PC-3 (cell line): ENCODE measurements at regions of chr5 and their contacts with region 1.

Region 1: GRCh38 chr5:43207601-43208000 is 15.6 kb downstream of the NIM1K start:
- DNase-seq: peak; percentile 66
- ATAC-seq: no peak
- H3K4me3 ChIP-seq: no peak overlapping the region
- H3K27ac ChIP-seq: no peak overlapping the region
- H3K4me1 ChIP-seq: peaks cover 27% of the 10 kb centered on the region
- H3K27me3 ChIP-seq: no peaks in the 10 kb centered on the region
- CTCF ChIP-seq: no peak

Region 2: DNA sequence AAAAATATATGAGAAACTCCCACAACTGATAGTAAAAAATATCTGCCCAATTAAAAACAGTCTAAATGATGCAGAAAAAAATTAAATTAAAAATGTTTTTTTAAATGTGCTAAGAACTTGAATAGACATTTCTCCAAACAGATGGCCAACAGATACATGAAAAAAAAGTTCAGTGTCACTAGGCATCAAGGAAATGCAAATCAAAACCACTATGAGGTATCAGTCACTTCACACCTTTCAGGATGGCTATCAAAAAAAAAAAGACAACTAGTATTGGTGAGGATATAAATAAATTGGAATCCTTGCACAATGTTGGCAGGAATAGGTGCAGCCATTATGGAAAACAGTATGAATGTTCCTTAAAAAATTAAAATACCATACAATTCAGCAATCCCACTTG is 70.3 kb before region 1 on chr5:
- CTCF ChIA-PET with region 1: no interaction called
- POLR2A ChIA-PET with region 1: no interaction called
- intact Hi-C with region 1: no loop called
- DNase-seq: no peak
- ATAC-seq: no peak
- H3K4me3 ChIP-seq: no peak overlapping the region
- H3K27ac ChIP-seq: no peak overlapping the region
- H3K4me1 ChIP-seq: no peaks in the 10 kb centered on the region
- H3K27me3 ChIP-seq: no peaks in the 10 kb centered on the region
- CTCF ChIP-seq: no peak

Region 3: GRCh38 chr5:43227655-43228054 is 20.1 kb after region 1 on chr5:
- CTCF ChIA-PET with region 1: no interaction called
- POLR2A ChIA-PET with region 1: interaction called, 5 read pairs
- intact Hi-C with region 1: loop called (anchors 2 kb)
- DNase-seq: peak; percentile 84
- ATAC-seq: peak; percentile 60
- H3K4me3 ChIP-seq: no peak overlapping the region
- H3K27ac ChIP-seq: no peak overlapping the region
- H3K4me1 ChIP-seq: peaks cover 3% of the 10 kb centered on the region; the same call in 1 of the 2 replicates
- H3K27me3 ChIP-seq: no peaks in the 10 kb centered on the region
- CTCF ChIP-seq: peak; percentile 80